Lower leg skin (tissue), 4 donors: ENCODE measurements at regions of chr1 and their contacts with region 1.

Region 1: GRCh38 chr1:244796718-244797406 is 38.6 kb upstream of the COX20 start:
- DNase-seq: peak; percentile 60 to 87
- H3K4me3 ChIP-seq: no peak overlapping the region
- CTCF ChIP-seq: peak in 1 of 3 donors; percentile 68
- POLR2A ChIP-seq: no peak

Region 2: GRCh38 chr1:244603498-244603897 is 193.4 kb before region 1 on chr1:
- intact Hi-C with region 1: loop called (anchors 2 kb)
- DNase-seq: no peak
- H3K4me3 ChIP-seq: no peak overlapping the region
- CTCF ChIP-seq: peak in 1 of 3 donors; percentile 58
- POLR2A ChIP-seq: no peak

Region 3: DNA sequence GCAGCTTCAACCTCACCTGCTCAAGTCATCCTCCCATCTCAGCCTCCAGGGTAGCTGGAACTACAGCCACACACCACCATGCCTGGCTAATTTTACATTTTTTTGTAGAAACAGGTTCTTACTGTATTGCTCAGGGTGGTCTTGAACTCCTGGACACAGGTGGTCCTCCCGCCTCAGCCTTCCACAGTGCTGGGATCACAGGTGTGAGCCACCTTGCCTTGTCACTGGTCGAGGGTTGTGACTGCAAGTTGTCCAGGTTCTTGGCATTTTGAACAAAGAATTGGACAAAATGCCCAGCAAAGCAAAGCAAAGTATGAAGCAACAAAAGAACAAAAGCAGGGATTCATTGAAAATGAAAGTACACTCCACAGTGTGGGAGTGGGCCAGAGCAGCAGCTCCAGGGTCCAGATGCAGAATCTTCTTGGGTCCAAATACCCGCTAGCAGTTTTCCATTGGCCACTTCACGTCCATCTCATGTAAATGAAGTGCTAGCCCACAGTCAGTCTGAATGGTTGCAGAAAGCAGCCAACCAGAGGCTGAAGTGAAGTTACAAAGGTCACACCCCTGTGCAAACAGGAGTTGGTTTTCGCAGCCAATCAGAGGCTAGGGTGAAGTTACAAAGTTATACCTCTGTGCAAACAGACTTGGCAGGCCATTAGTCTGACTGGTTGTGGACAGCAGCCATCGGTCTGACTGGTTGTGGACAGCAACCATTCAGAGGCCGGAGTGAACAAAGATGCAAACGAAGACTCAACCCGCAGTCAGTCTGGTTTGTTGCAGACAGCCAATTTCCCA is 248.4 kb after region 1 on chr1:
- intact Hi-C with region 1: loop called (anchors 10 kb)
- DNase-seq: no peak
- H3K4me3 ChIP-seq: no peak overlapping the region
- CTCF ChIP-seq: no peak
- POLR2A ChIP-seq: no peak